ENCODE measurements at regions of chr20 and their contacts with region 1.

Region 1: GRCh38 chr20:62002882-62003480 is 62.7 kb downstream of the TAF4 start:
- DNase-seq: no peak
- ATAC-seq: no peak
- H3K4me3 ChIP-seq: no peak overlapping the region
- H3K4me3 Mint-ChIP-seq: no peak overlapping the region
- H3K27ac ChIP-seq: no peak overlapping the region
- H3K27ac Mint-ChIP-seq: no peak overlapping the region
- H3K4me1 ChIP-seq: peaks cover 0 to 12% of the 10 kb centered on the region in 2 experiments
- H3K4me1 Mint-ChIP-seq: peaks cover 0 to 8% (median 0%) of the 10 kb centered on the region in 3 donors
- H3K27me3 ChIP-seq: no peaks in the 10 kb centered on the region
- H3K27me3 Mint-ChIP-seq: no peaks in the 10 kb centered on the region

Region 2: DNA sequence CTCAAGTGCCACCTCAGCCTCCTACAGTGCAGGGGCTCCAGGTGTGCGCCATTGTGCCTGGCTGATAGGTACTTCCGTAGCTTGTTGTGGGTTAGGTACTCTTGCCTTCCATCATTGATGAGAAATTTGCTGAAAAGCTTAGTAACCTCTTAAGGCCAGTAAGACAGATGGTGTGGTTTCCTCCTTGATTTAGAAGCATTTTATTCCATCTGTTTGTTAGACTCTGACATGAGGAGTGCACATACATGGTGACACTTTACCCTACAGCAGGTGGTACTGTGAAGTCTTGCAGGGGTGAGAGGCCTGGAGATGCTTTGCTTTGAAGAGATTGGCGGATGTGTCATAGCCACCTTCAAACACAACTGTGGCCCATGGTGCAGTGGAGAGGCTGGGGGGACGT is 165.1 kb after region 1 on chr20:
- CTCF ChIA-PET with region 1: interaction called in 1 of 2 experiments, 11 read pairs
- POLR2A ChIA-PET with region 1: no interaction called
- DNase-seq: no peak
- ATAC-seq: no peak
- H3K4me3 ChIP-seq: no peak overlapping the region
- H3K4me3 Mint-ChIP-seq: no peak overlapping the region
- H3K27ac ChIP-seq: no peak overlapping the region
- H3K27ac Mint-ChIP-seq: no peak overlapping the region
- H3K4me1 ChIP-seq: no peaks in the 10 kb centered on the region
- H3K4me1 Mint-ChIP-seq: no peaks in the 10 kb centered on the region
- H3K27me3 ChIP-seq: no peaks in the 10 kb centered on the region
- H3K27me3 Mint-ChIP-seq: no peaks in the 10 kb centered on the region

Region 3: GRCh38 chr20:63138855-63139341 is 1135.9 kb after region 1 on chr20:
- CTCF ChIA-PET with region 1: no interaction called
- POLR2A ChIA-PET with region 1: no interaction called
- DNase-seq: no peak
- ATAC-seq: no peak
- H3K4me3 ChIP-seq: no peak overlapping the region
- H3K4me3 Mint-ChIP-seq: no peak overlapping the region
- H3K27ac ChIP-seq: no peak overlapping the region
- H3K27ac Mint-ChIP-seq: no peak overlapping the region
- H3K4me1 ChIP-seq: no peaks in the 10 kb centered on the region
- H3K4me1 Mint-ChIP-seq: no peaks in the 10 kb centered on the region
- H3K27me3 ChIP-seq: peaks cover 2 to 22% of the 10 kb centered on the region in 2 experiments
- H3K27me3 Mint-ChIP-seq: peaks cover 13 to 24% of the 10 kb centered on the region in 2 donors

Measured in T-cell (primary cell).